ENCODE measurements at regions of chr17 and their contacts with region 1.

Region 1: DNA sequence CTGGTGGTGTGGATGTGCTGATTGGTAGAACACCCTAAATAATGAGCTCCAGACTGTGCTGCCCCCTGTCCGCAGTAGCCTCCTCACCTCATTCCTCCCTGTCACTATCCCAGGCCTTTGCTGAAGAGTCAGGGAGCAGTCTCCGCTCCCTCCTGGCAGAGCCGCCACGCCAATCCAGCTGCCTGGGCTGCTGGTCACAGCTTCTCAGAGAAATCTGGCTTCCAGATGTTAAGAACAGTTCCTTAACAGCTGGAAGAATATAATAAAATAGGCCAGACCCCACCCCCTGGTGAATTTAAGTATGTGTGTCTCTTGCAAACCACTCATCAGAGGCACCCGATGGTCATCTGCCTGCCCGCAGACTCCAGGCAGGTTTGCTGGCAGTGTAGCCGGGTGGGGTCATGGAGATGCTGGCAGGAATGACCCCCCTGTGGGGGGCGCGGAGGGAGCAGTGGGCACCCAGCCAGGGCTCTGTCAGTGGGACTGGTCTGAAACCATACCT is 161.0 kb downstream of the CCDC182 start:
- DNase-seq: peak; percentile 83
- H3K4me3 ChIP-seq: no peak overlapping the region
- H3K27ac ChIP-seq: peak overlapping the region in 1 of 2 experiments; percentile 100; a peak in 2 of 4 replicates
- H3K4me1 ChIP-seq: peaks cover 13 to 89% of the 10 kb centered on the region in 2 experiments; a peak in 3 of 4 replicates
- H3K27me3 ChIP-seq: no peaks in the 10 kb centered on the region
- CTCF ChIP-seq: no peak
- EP300 ChIP-seq: peak in 1 of 2 experiments; percentile 86; a peak in 1 of 4 replicates
- RAD21 ChIP-seq: peak; percentile 47; the same call in 1 of the 2 replicates

Region 2: GRCh38 chr17:57561072-57561861 is 22.8 kb before region 1 on chr17:
- CTCF ChIA-PET with region 1: interaction called, 75 read pairs
- POLR2A ChIA-PET with region 1: interaction called, 66 read pairs
- DNase-seq: no peak
- H3K4me3 ChIP-seq: no peak overlapping the region
- H3K27ac ChIP-seq: peak overlapping the region in 1 of 2 experiments; percentile 99; a peak in 2 of 4 replicates
- H3K4me1 ChIP-seq: peaks cover 10 to 94% of the 10 kb centered on the region in 2 experiments; a peak in 3 of 4 replicates
- H3K27me3 ChIP-seq: no peaks in the 10 kb centered on the region
- CTCF ChIP-seq: no peak
- EP300 ChIP-seq: no peak
- RAD21 ChIP-seq: no peak

Region 3: GRCh38 chr17:57570724-57571344 is 13.3 kb before region 1 on chr17:
- CTCF ChIA-PET with region 1: interaction called, 75 read pairs
- POLR2A ChIA-PET with region 1: interaction called, 66 read pairs
- DNase-seq: no peak
- H3K4me3 ChIP-seq: no peak overlapping the region
- H3K27ac ChIP-seq: peak overlapping the region in 1 of 2 experiments; percentile 100; a peak in 2 of 4 replicates
- H3K4me1 ChIP-seq: peaks cover 0 to 87% of the 10 kb centered on the region in 2 experiments; a peak in 2 of 4 replicates
- H3K27me3 ChIP-seq: no peaks in the 10 kb centered on the region
- CTCF ChIP-seq: no peak
- EP300 ChIP-seq: peak in 1 of 2 experiments; percentile 41; a peak in 1 of 4 replicates
- RAD21 ChIP-seq: peak; percentile 5; the same call in 1 of the 2 replicates

Region 4: DNA sequence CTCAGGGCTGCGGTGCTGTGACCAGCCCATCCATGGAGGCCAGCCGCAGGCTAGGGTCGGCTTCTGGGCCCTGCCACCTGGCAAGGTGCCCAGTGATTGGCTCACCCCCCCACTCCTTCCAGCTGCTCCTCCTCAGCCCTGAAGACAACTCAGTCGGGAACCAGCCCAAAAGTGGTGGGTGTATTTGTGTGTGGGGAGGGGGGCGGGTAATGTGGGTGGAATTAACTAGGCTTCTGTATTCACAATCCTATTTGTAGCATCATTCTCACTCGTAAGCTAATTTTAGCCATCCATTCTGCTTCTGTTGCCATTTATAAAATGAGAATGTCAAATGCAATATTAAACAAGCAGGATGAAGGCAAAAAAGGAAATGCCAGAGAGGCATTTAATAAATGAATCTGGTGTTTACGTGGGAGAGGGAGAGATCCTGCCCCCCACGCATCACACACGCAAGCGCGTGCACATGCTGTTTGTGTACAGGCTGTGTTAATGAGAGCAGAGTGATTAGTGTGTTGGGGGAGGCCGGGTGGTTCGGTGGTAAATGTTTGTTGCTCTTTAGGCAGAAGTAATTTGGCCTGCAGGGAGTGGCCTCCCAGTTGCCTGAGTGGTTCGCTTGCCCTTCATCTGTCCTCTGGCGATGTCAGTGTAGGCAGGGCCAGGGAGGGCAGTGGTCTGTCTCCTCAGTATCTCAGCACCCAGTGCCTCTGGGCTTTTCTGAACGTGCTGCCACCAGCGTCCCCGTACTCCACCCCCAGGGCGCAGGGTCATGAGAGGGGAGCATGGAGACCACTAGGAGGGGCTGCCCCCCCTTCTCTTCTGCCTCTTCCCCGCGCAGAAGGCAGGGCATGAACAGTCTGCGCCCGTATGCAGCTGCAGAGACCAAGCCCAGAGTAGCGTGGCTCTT is 20.9 kb after region 1 on chr17:
- CTCF ChIA-PET with region 1: interaction called, 109 read pairs
- POLR2A ChIA-PET with region 1: interaction called, 18 read pairs
- DNase-seq: peak; percentile 89
- H3K4me3 ChIP-seq: peak overlapping the region in 1 of 2 experiments; percentile 18; a peak in 1 of 4 replicates
- H3K27ac ChIP-seq: peak overlapping the region; percentile 59 to 99; a peak in 3 of 4 replicates
- H3K4me1 ChIP-seq: peaks cover 26 to 90% of the 10 kb centered on the region in 2 experiments
- H3K27me3 ChIP-seq: no peaks in the 10 kb centered on the region
- CTCF ChIP-seq: no peak; the same call in 1 of the 2 replicates
- EP300 ChIP-seq: peak in 1 of 2 experiments; percentile 51; a peak in 2 of 4 replicates
- RAD21 ChIP-seq: peak; percentile 56

Region 5: DNA sequence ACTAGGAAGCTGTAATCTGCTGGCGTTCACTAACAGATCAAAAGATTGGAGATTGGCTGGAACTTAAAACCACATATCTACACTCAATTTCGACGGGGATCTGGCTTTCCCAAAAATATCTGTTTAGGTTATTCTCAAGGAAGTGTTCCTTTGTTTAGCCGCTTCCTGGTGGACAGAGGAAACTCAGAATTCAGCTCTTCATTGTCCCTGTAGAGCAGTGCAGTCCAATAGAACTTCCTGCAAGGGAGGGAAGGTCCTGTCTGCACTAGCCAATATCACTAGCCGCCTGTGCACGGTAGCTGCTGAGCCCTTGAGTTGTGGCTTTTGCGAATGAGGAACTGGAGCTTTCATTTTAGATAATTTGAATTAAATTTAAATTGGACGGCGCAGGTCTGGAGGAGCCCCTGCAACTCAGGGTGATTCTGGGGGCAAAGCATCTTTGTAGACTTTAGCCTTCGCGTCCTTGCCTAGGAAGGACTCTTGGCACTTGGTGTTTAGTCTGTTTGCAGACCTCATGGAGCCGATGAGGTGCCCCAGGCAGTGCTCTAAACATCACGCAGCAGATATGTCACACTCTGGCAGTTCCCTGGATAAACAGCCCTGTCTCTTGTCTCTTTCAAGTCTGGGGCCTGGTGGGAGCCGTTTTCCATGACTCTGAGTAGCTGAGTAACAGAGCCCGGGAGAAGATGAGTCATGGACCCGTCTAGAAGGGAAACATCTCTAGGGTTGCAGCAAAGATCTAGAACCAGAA is 38.8 kb after region 1 on chr17:
- CTCF ChIA-PET with region 1: interaction called, 6 read pairs
- POLR2A ChIA-PET with region 1: interaction called, 18 read pairs
- DNase-seq: peak; percentile 82
- H3K4me3 ChIP-seq: no peak overlapping the region
- H3K27ac ChIP-seq: peak overlapping the region; percentile 87 to 100
- H3K4me1 ChIP-seq: peaks cover 53 to 84% of the 10 kb centered on the region in 2 experiments
- H3K27me3 ChIP-seq: no peaks in the 10 kb centered on the region
- CTCF ChIP-seq: no peak
- EP300 ChIP-seq: peak; percentile 71 to 97; a peak in 3 of 4 replicates
- RAD21 ChIP-seq: peak; percentile 46

Region 6: GRCh38 chr17:57889892-57890856 is 306.1 kb after region 1 on chr17:
- CTCF ChIA-PET with region 1: no interaction called
- POLR2A ChIA-PET with region 1: no interaction called
- DNase-seq: peak; percentile 66
- H3K4me3 ChIP-seq: no peak overlapping the region
- H3K27ac ChIP-seq: peak overlapping the region; percentile 82 to 96
- H3K4me1 ChIP-seq: peaks cover 32 to 55% of the 10 kb centered on the region in 2 experiments
- H3K27me3 ChIP-seq: no peaks in the 10 kb centered on the region
- CTCF ChIP-seq: peak; percentile 14; the same call in 1 of the 2 replicates
- EP300 ChIP-seq: peak; percentile 39 to 93; a peak in 2 of 4 replicates
- RAD21 ChIP-seq: no peak

Measured in SK-N-SH (cell line).